Posterior vena cava (tissue), 2 donors: ENCODE measurements at regions of chr12 and their contacts with region 1.

Region 1: GRCh38 chr12:95204141-95204866 is 13.0 kb downstream of the FGD6 start:
- DNase-seq: no peak

Region 2: GRCh38 chr12:95124106-95124505 is 80.2 kb before region 1 on chr12:
- intact Hi-C with region 1: loop called in 1 of 2 experiments (anchors 10 kb)
- DNase-seq: no peak

Region 3: GRCh38 chr12:95169368-95169767 is 34.9 kb before region 1 on chr12:
- intact Hi-C with region 1: no loop called
- DNase-seq: no peak